ENCODE measurements at regions of chr6 and their contacts with region 1.

Region 1: DNA sequence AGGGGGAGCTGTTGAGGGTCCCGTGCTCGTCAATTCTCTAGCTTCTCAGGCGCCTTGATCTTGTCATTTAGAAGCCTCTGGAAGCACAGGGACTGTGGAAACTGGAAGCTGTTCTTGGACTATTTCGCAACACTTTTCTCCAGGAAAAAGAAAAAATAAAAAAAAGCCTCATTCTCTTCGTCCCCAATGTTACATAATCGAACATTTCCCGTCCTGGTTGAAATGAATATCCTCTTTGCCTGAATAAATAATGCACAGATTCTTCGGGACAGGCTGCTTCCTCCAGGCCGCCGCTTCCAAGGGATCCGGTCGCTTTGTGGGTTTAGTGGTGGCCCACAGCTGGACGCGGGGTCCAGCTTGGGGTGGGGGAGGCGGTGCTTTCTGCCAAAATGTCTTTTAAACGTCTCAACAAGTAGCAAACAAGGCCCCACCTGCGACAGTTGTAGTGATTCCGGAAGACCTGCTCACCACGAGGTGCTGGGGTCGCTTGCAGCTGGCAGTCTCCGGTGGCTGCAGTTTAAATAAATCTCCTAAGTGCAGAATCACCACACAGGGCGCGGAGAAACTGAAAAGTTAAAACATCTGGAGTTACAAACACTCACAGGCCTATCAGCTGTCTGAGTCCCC is 125.9 kb upstream of the ESR1 start:
- DNase-seq: no peak
- ATAC-seq: no peak
- H3K4me3 ChIP-seq: no peak overlapping the region
- H3K27ac ChIP-seq: no peak overlapping the region
- H3K4me1 ChIP-seq: no peaks in the 10 kb centered on the region
- H3K27me3 ChIP-seq: peaks cover 3% of the 10 kb centered on the region; the same call in 1 of the 2 replicates
- CTCF ChIP-seq: no peak
- POLR2A ChIP-seq: no peak
- RAD21 ChIP-seq: no peak

Region 2: GRCh38 chr6:151669196-151669688 is 12.3 kb before region 1 on chr6:
- CTCF ChIA-PET with region 1: no interaction called
- POLR2A ChIA-PET with region 1: interaction called, 10 read pairs
- dilution Hi-C with region 1: no loop called
- in situ Hi-C with region 1: no loop called
- intact Hi-C with region 1: no loop called
- DNase-seq: no peak
- ATAC-seq: no peak
- H3K4me3 ChIP-seq: no peak overlapping the region
- H3K27ac ChIP-seq: no peak overlapping the region
- H3K4me1 ChIP-seq: no peaks in the 10 kb centered on the region
- H3K27me3 ChIP-seq: no peaks in the 10 kb centered on the region; the same call in 1 of the 2 replicates
- CTCF ChIP-seq: no peak
- POLR2A ChIP-seq: no peak
- RAD21 ChIP-seq: no peak